ENCODE measurements at regions of chr19 and their contacts with region 1.

Region 1: DNA sequence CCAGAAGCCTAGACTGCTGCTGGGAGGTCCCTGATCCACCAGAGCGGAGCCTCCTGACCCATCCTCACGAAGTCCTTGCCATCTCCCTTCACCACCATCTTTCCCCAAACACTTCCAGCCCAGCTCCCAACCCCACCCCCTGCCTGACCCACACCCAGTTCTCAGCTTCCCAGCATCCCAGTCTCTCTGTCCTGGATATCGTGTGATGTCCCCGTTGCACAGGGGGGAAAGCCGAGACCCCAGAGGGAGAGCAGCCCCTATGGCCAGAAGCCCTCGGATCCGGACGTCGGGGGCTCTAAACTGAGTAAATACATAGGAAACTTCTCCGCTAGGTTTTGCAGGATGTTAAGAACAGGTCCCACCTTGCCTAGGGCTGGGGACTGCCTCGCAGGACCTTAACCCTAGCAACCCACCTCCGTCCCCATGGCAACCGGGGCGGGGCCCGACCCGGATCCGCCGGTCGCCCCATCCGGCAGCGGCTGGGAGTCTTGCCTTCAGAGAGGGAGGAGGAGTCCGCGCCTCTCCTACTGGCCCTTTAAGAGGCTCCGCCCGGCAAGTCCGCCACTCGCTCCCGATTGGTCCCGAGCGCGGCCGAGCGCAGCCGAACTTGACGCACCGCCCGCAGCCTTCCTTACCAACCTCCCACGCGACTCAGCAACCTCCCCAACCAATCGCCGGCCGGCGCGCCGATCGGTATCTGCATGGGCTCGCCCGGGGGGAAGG is 451 bp upstream of the HMG20B start:
- DNase-seq: peak; percentile 97
- ATAC-seq: peak; percentile 94
- H3K4me3 ChIP-seq: peak overlapping the region; percentile 41 to 58 (median 47); a peak in 4 of 6 replicates
- H3K27ac ChIP-seq: no peak overlapping the region
- H3K4me1 ChIP-seq: peaks cover 41% of the 10 kb centered on the region
- H3K27me3 ChIP-seq: no peaks in the 10 kb centered on the region
- CTCF ChIP-seq: no peak
- EP300 ChIP-seq: no peak; a peak in 1 of 4 replicates
- POLR2A ChIP-seq: no peak
- RAD21 ChIP-seq: no peak

Region 2: GRCh38 chr19:3505598-3506383 is 66.5 kb before region 1 on chr19 and contains the start of gene FZR1:
- CTCF ChIA-PET with region 1: no interaction called
- POLR2A ChIA-PET with region 1: interaction called, 3 read pairs
- in situ Hi-C with region 1: no loop called
- intact Hi-C with region 1: loop called (anchors 5 kb)
- DNase-seq: peak; percentile 95
- ATAC-seq: peak; percentile 78
- H3K4me3 ChIP-seq: peak within 1 kb of the TSS; percentile 82 to 96 (median 92)
- H3K27ac ChIP-seq: peak within 1 kb of the TSS; percentile 84
- H3K4me1 ChIP-seq: peaks cover 57% of the 10 kb centered on the region
- H3K27me3 ChIP-seq: no peaks in the 10 kb centered on the region
- CTCF ChIP-seq: peak; percentile 48
- EP300 ChIP-seq: 0 out of 4 replicates have a peak, but pooled peaks of 1 of the 2 experiments have one; percentile 39
- POLR2A ChIP-seq: peak; percentile 56 to 64; a peak in 3 of 4 replicates
- RAD21 ChIP-seq: no peak
- total RNA-seq, gene FZR1: 18.3 and 29.0 TPM in 2 replicates

Region 3: DNA sequence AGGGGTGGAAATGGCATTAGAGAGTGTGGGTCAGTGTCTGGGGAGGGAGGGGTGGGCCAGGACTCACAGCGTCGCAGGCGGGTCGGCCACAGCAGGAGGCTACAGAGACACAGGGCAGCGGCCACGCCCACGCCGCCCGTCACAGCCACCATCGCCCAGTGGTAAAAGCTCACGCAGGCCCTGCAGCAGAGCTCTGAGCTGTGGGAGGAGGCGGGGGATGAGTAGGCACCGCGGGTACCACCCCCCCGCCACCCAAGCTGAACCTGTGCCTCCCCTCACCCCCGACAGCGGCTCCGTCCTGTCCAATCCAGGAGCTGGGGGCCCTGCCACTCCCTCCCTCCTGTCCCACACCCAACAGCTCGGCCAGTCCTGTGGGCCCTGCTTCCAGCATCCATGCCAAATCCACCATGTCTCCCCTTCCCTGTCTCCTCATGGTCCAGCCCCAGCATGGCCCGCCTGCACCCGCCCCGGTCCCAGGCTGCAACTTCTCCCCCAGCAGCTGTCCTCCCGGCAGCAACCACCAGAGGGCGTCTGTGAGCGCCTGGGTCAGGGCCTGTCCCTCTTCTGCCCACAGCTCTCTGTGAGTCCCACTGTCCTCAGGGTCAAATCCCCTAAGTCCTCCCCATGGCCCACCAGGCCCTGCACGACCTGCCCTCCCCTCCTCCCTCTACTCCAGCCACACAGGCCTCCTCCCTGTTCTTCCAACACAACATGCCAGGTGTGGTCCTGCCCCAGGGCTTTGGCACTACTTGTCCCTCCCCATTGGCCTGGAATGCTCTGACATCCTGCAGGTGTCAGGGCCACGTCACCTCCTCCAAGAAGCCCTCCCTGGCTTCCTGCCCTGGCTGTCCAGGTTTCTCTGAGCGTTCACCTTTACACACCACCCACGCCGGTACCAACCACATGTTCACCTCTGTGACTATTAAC is 27.3 kb before region 1 on chr19:
- CTCF ChIA-PET with region 1: interaction called, 14 read pairs
- POLR2A ChIA-PET with region 1: no interaction called
- in situ Hi-C with region 1: no loop called
- intact Hi-C with region 1: loop called (anchors 1 kb)
- DNase-seq: peak; percentile 35
- ATAC-seq: peak; percentile 75
- H3K4me3 ChIP-seq: no peak overlapping the region
- H3K27ac ChIP-seq: no peak overlapping the region
- H3K4me1 ChIP-seq: no peaks in the 10 kb centered on the region
- H3K27me3 ChIP-seq: no peaks in the 10 kb centered on the region
- CTCF ChIP-seq: peak; percentile 95
- EP300 ChIP-seq: no peak
- POLR2A ChIP-seq: no peak
- RAD21 ChIP-seq: peak; percentile 82

Region 4: GRCh38 chr19:3586124-3586626 is 13.9 kb after region 1 on chr19:
- CTCF ChIA-PET with region 1: no interaction called
- POLR2A ChIA-PET with region 1: no interaction called
- in situ Hi-C with region 1: no loop called
- intact Hi-C with region 1: no loop called
- DNase-seq: no peak
- ATAC-seq: no peak; the same call in 2 of the 3 replicates
- H3K4me3 ChIP-seq: peak overlapping the region in 1 of 3 experiments; percentile 45; a peak in 1 of 6 replicates
- H3K27ac ChIP-seq: no peak overlapping the region
- H3K4me1 ChIP-seq: no peaks in the 10 kb centered on the region
- H3K27me3 ChIP-seq: peaks cover 2 to 23% of the 10 kb centered on the region in 2 experiments; a peak in 4 of 5 replicates
- CTCF ChIP-seq: peak; percentile 59
- EP300 ChIP-seq: no peak
- POLR2A ChIP-seq: no peak
- RAD21 ChIP-seq: peak; percentile 14; the same call in 1 of the 2 replicates

Region 5: GRCh38 chr19:3606690-3607289 is 34.5 kb after region 1 on chr19 and contains the start of gene TBXA2R:
- CTCF ChIA-PET with region 1: no interaction called
- POLR2A ChIA-PET with region 1: no interaction called
- in situ Hi-C with region 1: no loop called
- intact Hi-C with region 1: no loop called
- DNase-seq: no peak
- ATAC-seq: peak; percentile 51
- H3K4me3 ChIP-seq: peak within 1 kb of the TSS; percentile 37 to 59 (median 49)
- H3K27ac ChIP-seq: no peak within 1 kb of the TSS
- H3K4me1 ChIP-seq: peaks cover 48% of the 10 kb centered on the region
- H3K27me3 ChIP-seq: peaks cover 0 to 29% of the 10 kb centered on the region in 2 experiments; a peak in 2 of 5 replicates
- CTCF ChIP-seq: no peak
- EP300 ChIP-seq: no peak
- POLR2A ChIP-seq: no peak
- RAD21 ChIP-seq: no peak
- total RNA-seq, gene TBXA2R: not detected in 2 replicates